ENCODE measurements at regions of chr4 and their contacts with region 1.

Region 1: DNA sequence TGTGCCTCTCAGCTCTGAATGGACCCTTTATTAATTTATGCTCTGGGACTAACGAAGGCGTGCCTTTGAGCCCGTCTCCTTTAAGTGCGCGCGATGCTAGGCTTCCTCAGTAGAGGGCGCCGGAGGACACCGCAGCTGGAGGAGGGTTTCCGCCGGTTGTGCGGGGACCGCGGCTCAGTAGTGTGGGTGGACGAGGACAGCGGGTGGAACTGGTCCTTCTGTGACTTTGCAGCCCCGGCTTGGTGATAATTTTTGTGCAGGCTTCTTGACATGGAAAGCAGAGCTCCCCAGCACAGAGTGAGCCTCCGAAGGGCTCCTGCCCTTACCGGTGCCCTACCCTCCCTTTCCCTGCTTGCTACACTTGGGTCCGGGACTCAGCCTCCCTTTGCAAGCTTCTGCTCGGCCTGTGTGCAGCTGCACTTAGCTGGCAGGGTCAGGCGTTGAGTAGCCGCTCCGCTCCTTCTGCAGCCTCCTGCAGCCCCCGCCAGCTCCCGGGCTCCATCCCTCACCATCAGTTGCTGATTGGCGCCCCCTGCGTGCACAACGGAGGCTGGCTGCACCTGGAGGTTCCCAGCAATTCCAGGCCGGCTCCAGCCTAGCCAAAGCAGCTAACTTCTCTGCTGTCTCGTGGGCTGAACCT is 26.8 kb upstream of the BOD1L1 start:
- DNase-seq: no peak
- ATAC-seq: peak; percentile 96
- H3K4me3 ChIP-seq: peak overlapping the region; percentile 40 to 53
- H3K27ac ChIP-seq: no peak overlapping the region
- H3K4me1 ChIP-seq: peaks cover 0 to 10% of the 10 kb centered on the region in 2 experiments; a peak in 3 of 4 replicates
- H3K27me3 ChIP-seq: 0 out of 2 replicates have a peak, but pooled peaks cover 3% of the 10 kb centered on the region
- CTCF ChIP-seq: peak; percentile 63 to 93 (median 76)
- POLR2A ChIP-seq: no peak
- RAD21 ChIP-seq: peak; percentile 60

Region 2: GRCh38 chr4:12852338-12853307 is 801.7 kb before region 1 on chr4:
- CTCF ChIA-PET with region 1: interaction called, 9 read pairs
- POLR2A ChIA-PET with region 1: no interaction called
- RAD21 ChIA-PET with region 1: no interaction called
- intact Hi-C with region 1: loop called (anchors 5 kb)
- DNase-seq: peak; percentile 63
- ATAC-seq: peak; percentile 97
- H3K4me3 ChIP-seq: no peak overlapping the region
- H3K27ac ChIP-seq: no peak overlapping the region
- H3K4me1 ChIP-seq: peaks cover 0 to 4% of the 10 kb centered on the region in 2 experiments; a peak in 1 of 4 replicates
- H3K27me3 ChIP-seq: 0 out of 2 replicates have a peak, but pooled peaks cover 9% of the 10 kb centered on the region
- CTCF ChIP-seq: peak; percentile 54 to 68 (median 68); a peak in 5 of 6 replicates
- POLR2A ChIP-seq: no peak
- RAD21 ChIP-seq: peak; percentile 89

Region 3: GRCh38 chr4:13966231-13967195 is 312.2 kb after region 1 on chr4:
- CTCF ChIA-PET with region 1: no interaction called
- POLR2A ChIA-PET with region 1: no interaction called
- RAD21 ChIA-PET with region 1: no interaction called
- intact Hi-C with region 1: loop called (anchors 10 kb)
- DNase-seq: no peak
- ATAC-seq: no peak
- H3K4me3 ChIP-seq: no peak overlapping the region
- H3K27ac ChIP-seq: no peak overlapping the region
- H3K4me1 ChIP-seq: no peaks in the 10 kb centered on the region
- H3K27me3 ChIP-seq: no peaks in the 10 kb centered on the region
- CTCF ChIP-seq: no peak
- POLR2A ChIP-seq: no peak
- RAD21 ChIP-seq: no peak

Region 4: GRCh38 chr4:15001869-15002658 is 1347.8 kb after region 1 on chr4 and contains the start of gene CPEB2:
- CTCF ChIA-PET with region 1: no interaction called
- POLR2A ChIA-PET with region 1: no interaction called
- RAD21 ChIA-PET with region 1: no interaction called
- intact Hi-C with region 1: loop called (anchors 5 kb)
- DNase-seq: peak; percentile 67
- ATAC-seq: peak; percentile 75
- H3K4me3 ChIP-seq: peak within 1 kb of the TSS; percentile 65 to 66
- H3K27ac ChIP-seq: peak within 1 kb of the TSS; percentile 71; the same call in 1 of the 2 replicates
- H3K4me1 ChIP-seq: peaks cover 2 to 18% of the 10 kb centered on the region in 2 experiments; a peak in 3 of 4 replicates
- H3K27me3 ChIP-seq: no peaks in the 10 kb centered on the region
- CTCF ChIP-seq: no peak; a peak in 1 of 6 replicates
- POLR2A ChIP-seq: peak; percentile 80
- RAD21 ChIP-seq: no peak
- total RNA-seq, gene CPEB2: 1.3 TPM

Measured in HCT116 (cell line).